Activated CD4-positive, alpha-beta T cell treated with anti-CD3 and anti-CD28 coated beads, Interleukin-2, amount 10 ng/mL, durations not matched to agents 24 days and 14 days (primary cell): ENCODE measurements at regions of chr9 and their contacts with region 1.

Region 1: DNA sequence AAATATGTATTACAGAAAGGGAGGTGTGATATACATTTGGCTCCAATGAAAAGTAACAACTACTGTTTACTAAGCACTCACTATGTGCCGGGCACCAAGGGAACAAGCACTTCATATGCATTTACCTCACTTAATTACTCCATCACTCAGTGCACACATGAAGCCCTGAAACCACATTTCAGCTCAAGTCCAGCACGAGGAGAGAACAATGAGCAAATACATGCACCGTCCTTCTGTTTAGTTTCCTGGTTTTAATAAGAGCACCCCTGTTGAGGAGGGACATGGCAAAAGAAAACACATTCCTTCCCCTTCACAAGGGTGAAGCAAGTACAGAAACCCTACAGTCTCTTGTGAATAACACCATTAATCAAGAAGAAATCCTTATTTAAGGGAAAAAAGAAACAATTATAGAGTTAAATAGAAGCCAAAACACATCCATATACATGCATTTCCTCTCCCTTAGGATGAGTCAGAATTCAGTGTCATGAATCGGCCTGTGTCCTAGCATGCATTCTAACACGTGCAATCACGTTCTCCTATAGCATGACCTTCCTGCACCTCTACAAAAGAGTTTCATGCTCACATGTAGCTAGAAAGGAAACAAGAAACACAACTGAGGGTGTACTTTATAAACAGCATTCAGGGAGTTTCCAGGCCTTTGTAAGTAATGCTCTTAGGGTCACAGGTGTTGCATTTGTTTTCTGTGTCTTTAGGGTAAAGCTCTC is 411.6 kb downstream of the BNC2 start:
- DNase-seq: no peak
- H3K4me3 Mint-ChIP-seq: no peak overlapping the region
- H3K27ac Mint-ChIP-seq: no peak overlapping the region
- H3K4me1 Mint-ChIP-seq: no peaks in the 10 kb centered on the region
- H3K27me3 Mint-ChIP-seq: no peaks in the 10 kb centered on the region

Region 2: GRCh38 chr9:16442622-16443021 is 16.2 kb before region 1 on chr9:
- intact Hi-C with region 1: no loop called
- DNase-seq: no peak
- H3K4me3 Mint-ChIP-seq: no peak overlapping the region
- H3K27ac Mint-ChIP-seq: no peak overlapping the region
- H3K4me1 Mint-ChIP-seq: no peaks in the 10 kb centered on the region
- H3K27me3 Mint-ChIP-seq: no peaks in the 10 kb centered on the region

Region 3: GRCh38 chr9:16515879-16516301 is 57.0 kb after region 1 on chr9:
- intact Hi-C with region 1: loop called (anchors 10 kb)
- DNase-seq: no peak
- H3K4me3 Mint-ChIP-seq: no peak overlapping the region
- H3K27ac Mint-ChIP-seq: no peak overlapping the region
- H3K4me1 Mint-ChIP-seq: no peaks in the 10 kb centered on the region
- H3K27me3 Mint-ChIP-seq: no peaks in the 10 kb centered on the region

Region 4: GRCh38 chr9:16811987-16812685 is 353.3 kb after region 1 on chr9:
- intact Hi-C with region 1: no loop called
- DNase-seq: no peak
- H3K4me3 Mint-ChIP-seq: no peak overlapping the region
- H3K27ac Mint-ChIP-seq: no peak overlapping the region
- H3K4me1 Mint-ChIP-seq: no peaks in the 10 kb centered on the region
- H3K27me3 Mint-ChIP-seq: no peaks in the 10 kb centered on the region